Ovary (tissue), 10 donors: ENCODE measurements at regions of chr9 and their contacts with region 1.

Region 1: GRCh38 chr9:98833090-98833956 is 25.9 kb downstream of the GALNT12 start:
- DNase-seq: no peak
- H3K4me3 ChIP-seq: no peak overlapping the region
- H3K27ac ChIP-seq: no peak overlapping the region
- H3K4me1 ChIP-seq: no peaks in the 10 kb centered on the region
- H3K27me3 ChIP-seq: no peaks in the 10 kb centered on the region
- CTCF ChIP-seq: no peak
- EP300 ChIP-seq: no peak
- POLR2A ChIP-seq: no peak

Region 2: DNA sequence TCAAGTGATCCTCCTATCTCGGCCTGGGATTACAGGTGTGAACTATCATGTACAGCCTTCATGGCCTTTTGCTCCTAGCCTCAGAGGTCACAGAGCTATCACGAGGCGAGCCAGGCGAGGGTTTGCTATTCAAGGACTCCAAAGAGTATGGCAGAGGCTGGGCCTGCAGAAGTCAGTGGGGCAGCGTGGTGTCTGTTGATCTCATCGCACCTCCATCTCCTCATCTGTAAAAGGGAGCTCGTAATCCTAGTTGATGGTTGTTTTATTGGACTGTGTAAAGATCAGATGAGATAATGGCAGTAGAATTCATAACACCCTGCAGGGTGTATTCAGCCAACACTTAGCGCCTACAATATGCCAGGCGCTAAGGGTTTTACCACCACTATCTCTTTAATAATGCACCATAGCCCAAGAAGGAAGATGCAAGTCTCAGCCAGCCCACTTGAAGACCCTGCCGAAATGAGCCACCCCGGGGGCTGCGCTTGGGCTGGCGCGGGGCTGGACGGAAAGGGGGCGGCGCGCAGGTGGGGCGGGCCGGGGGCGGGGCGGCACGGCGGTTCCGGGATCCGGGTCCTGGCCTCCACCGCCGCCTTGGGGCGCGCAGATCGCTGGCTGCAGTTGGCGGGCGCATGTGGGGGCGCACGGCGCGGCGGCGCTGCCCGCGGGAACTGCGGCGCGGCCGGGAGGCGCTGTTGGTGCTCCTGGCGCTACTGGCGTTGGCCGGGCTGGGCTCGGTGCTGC is 26.1 kb before region 1 on chr9 and contains the start of gene GALNT12:
- intact Hi-C with region 1: loop called in 1 of 4 experiments (anchors 2 kb)
- DNase-seq: peak in 1 of 5 donors; percentile 31
- H3K4me3 ChIP-seq: peak within 1 kb of the TSS; percentile 42
- H3K27ac ChIP-seq: no peak within 1 kb of the TSS
- H3K4me1 ChIP-seq: peaks cover 3% of the 10 kb centered on the region
- H3K27me3 ChIP-seq: no peaks in the 10 kb centered on the region
- CTCF ChIP-seq: no peak
- EP300 ChIP-seq: no peak
- POLR2A ChIP-seq: no peak
- total RNA-seq, gene GALNT12: 0.23 to 7.0 (median 1.4) TPM

Region 3: GRCh38 chr9:98819231-98819630 is 14.1 kb before region 1 on chr9:
- intact Hi-C with region 1: no loop called
- DNase-seq: no peak
- H3K4me3 ChIP-seq: no peak overlapping the region
- H3K27ac ChIP-seq: no peak overlapping the region
- H3K4me1 ChIP-seq: no peaks in the 10 kb centered on the region
- H3K27me3 ChIP-seq: no peaks in the 10 kb centered on the region
- CTCF ChIP-seq: no peak
- EP300 ChIP-seq: no peak
- POLR2A ChIP-seq: no peak